ENCODE measurements at regions of chr5 and their contacts with region 1.

Region 1: DNA sequence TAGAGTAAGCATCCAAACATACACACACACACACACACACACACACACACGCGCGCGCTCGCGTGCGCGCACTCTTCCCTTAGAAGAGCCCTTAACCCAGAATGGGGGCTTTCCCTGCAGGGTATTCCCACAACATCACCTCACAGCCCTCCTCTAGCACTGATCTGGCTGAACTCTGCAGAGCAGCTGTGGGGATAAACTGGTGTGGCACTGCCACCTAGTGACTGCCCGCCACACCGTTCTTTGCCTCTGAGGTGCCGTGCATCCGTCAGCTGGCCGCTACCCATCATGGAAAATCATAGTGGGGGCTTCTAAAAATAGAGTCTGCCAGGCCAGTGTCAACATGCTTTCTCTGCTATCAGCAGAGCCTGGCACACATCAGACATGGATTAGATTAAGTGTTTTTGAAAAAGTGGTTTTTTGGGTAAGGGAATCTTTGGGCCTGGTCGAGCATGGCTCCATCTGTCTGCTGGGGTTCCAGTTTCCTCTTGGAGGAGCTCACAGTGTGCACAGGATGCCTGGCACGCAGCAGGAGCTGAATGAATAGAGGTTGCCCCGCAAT is 88.1 kb downstream of the KCNN2 start:
- DNase-seq: peak; percentile 50 to 73
- H3K4me3 ChIP-seq: no peak overlapping the region
- H3K27ac ChIP-seq: no peak overlapping the region
- H3K4me1 ChIP-seq: peaks cover 0 to 6% (median 6%) of the 10 kb centered on the region in 4 donors
- H3K27me3 ChIP-seq: no peaks in the 10 kb centered on the region
- CTCF ChIP-seq: peak; percentile 75

Region 2: DNA sequence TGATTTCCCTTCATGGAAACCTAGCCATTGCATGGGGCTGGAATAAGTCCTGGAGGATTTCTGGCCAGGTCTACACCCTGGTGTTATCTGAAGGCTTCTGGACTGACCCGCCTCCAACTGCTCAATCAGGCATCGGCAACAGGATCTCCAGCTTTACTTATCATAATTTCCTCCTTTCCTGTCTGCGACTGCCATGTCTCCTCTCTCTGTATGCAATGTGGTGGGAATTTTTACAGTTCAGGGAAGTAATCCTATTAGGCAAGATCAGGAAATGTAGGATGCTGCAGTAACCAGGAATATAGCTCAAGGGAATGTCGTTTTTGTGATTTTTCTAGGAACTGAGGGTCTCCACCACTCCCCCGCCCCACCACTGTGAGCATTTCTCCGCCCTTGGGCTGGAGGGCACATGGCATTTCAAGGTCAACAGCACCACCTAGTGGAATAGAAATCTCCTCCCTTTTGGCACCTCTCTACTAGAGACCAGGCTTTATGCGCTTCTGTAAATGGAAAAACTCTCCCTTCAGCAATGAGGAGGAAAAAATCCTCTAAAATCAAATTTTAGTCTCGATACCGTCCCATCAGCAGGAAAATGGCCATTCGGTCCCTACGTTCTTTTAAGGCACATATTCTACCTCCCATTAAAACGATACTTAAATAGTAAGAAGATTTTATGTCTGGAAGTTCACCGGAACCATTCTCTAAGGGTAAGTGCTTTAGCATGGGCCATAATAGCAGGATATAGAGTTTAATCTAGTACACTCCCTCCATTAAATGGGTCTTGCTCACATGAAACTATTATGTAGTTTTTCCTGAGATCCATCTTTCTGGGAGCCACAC is 843.4 kb before region 1 on chr5:
- intact Hi-C with region 1: loop called (anchors 2 kb)
- DNase-seq: peak in 1 of 2 donors; percentile 41
- H3K4me3 ChIP-seq: no peak overlapping the region
- H3K27ac ChIP-seq: no peak overlapping the region
- H3K4me1 ChIP-seq: no peaks in the 10 kb centered on the region
- H3K27me3 ChIP-seq: peaks cover 0 to 20% of the 10 kb centered on the region in 2 donors
- CTCF ChIP-seq: peak; percentile 59 to 68

Region 3: DNA sequence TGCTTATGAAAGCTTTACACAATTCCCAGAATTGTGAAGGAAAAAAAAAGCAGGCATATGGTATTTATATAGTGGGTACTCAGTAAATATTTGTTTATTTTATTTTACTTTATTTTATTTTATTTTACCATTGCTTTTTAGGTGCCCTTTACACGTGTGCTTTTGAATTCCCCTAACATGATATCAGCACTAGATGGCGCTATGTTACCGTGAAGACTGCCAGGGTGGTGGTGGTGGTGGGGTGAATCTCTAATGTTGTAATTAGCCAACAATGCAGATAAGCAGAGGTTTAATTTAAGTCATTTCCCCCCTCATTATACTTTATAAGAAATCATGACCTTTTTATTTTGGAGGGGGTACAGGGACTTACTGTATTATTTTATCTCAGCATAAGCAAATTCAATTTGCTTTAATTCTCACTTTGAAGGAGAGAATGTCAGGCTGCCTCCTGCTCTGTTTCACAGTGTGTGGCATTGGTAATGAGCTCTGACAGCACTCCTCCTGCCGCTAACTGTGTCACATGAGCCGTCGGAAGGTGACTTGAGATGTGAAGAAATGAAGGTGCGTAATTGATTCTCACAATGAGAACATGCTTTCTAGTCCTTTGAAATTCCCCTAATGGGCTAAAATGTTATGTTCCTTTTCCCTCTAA is 770.9 kb before region 1 on chr5:
- intact Hi-C with region 1: loop called (anchors 2 kb)
- DNase-seq: no peak
- H3K4me3 ChIP-seq: no peak overlapping the region
- H3K27ac ChIP-seq: no peak overlapping the region
- H3K4me1 ChIP-seq: no peaks in the 10 kb centered on the region
- H3K27me3 ChIP-seq: no peaks in the 10 kb centered on the region
- CTCF ChIP-seq: peak; percentile 48 to 50

Region 4: GRCh38 chr5:113806250-113806649 is 643.7 kb before region 1 on chr5:
- intact Hi-C with region 1: loop called (anchors 10 kb)
- DNase-seq: no peak
- H3K4me3 ChIP-seq: peak overlapping the region; percentile 13 to 21
- H3K27ac ChIP-seq: peak overlapping the region; percentile 67 to 69
- H3K4me1 ChIP-seq: peaks cover 0 to 29% (median 15%) of the 10 kb centered on the region in 4 donors
- H3K27me3 ChIP-seq: no peaks in the 10 kb centered on the region
- CTCF ChIP-seq: peak; percentile 33 to 42